ENCODE measurements at regions of chr18 and their contacts with region 1.

Region 1: GRCh38 chr18:54224379-54225014 is at the start of gene MBD2:
- DNase-seq: peak; percentile 97
- H3K4me3 ChIP-seq: peak within 1 kb of the TSS; percentile 72
- H3K27ac ChIP-seq: peak within 1 kb of the TSS; percentile 57
- H3K4me1 ChIP-seq: peaks cover 31% of the 10 kb centered on the region
- H3K27me3 ChIP-seq: no peaks in the 10 kb centered on the region
- CTCF ChIP-seq: peak; percentile 25; the same call in 1 of the 2 replicates
- total RNA-seq, gene MBD2: 79.7 and 86.7 TPM in 2 replicates

Region 2: DNA sequence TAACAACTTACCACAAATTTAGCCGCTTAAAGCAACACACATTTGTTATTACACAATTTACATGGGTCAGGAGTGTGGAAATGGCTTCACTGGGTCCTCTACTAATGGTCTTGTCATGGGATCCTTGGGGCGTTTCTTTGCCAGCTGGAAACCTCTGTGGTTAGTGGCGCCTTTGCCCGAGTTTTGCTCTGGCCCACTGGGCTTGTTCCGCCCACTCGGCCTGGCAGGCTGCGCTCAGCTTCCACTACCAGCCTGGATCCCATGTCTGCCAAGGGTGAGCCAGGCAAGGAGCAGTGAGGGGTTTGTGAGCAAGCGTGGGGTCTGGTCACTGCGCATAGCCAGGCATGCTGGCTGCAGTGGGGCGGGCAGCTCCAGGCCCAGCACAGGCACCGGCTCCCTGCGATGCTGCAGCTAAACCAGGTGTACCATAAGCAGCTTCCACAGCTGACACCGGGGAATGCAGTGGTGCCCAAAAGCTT is 16.2 kb after region 1 on chr18:
- CTCF ChIA-PET with region 1: no interaction called
- POLR2A ChIA-PET with region 1: no interaction called
- intact Hi-C with region 1: no loop called
- DNase-seq: no peak
- H3K4me3 ChIP-seq: no peak overlapping the region
- H3K27ac ChIP-seq: no peak overlapping the region
- H3K4me1 ChIP-seq: no peaks in the 10 kb centered on the region
- H3K27me3 ChIP-seq: no peaks in the 10 kb centered on the region
- CTCF ChIP-seq: no peak

Region 3: DNA sequence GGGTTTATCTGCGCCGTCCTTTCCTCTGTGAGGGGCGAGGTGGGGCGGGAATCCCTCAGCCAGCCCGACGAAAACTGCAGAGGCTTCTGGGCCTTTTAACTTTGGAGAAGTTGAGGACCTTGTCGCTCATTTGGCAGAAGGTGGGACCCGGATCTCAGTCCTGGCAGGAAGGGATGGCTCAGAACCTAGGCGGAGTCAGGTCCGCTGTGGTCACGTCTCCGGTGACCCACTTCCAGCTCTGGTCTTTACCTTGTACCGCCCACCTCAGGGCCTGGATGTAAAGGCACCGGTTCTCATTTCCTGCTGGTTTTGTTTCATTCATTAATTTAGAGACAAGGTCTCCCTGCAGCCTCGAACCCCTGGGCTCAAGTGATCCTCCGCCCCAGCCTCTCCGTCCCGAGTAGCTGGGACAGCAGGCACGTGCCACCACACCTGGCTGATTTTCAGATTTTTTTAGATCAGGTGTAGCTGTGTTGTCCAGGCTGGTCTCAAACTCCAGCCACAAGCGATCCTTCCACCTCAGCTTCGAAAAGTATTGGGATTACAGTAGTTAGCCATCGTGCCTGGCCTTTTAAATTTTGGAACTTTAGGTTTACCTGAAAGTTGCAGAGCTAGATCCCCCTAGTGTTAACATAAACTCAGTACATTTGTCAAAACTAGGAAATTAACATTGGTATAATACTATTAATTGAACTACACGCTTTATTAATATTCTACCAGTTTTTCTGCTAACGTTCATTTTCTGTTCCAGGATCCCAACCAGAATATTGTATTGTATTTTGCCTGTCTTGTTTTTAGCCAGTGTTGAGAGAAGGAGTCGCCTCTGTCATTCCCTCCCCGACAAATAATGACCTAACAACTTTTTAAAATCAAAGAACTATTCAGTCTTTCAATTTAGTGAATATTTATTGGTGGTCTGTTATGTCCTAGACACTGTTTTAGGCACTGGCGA is 45.7 kb after region 1 on chr18:
- CTCF ChIA-PET with region 1: no interaction called
- POLR2A ChIA-PET with region 1: no interaction called
- intact Hi-C with region 1: loop called (anchors 1 kb)
- DNase-seq: peak; percentile 37
- H3K4me3 ChIP-seq: peak overlapping the region; percentile 74
- H3K27ac ChIP-seq: peak overlapping the region; percentile 93
- H3K4me1 ChIP-seq: peaks cover 19% of the 10 kb centered on the region
- H3K27me3 ChIP-seq: no peaks in the 10 kb centered on the region
- CTCF ChIP-seq: peak; percentile 55; the same call in 1 of the 2 replicates

Region 4: GRCh38 chr18:54358495-54359040 is 134.1 kb after region 1 on chr18:
- CTCF ChIA-PET with region 1: no interaction called
- POLR2A ChIA-PET with region 1: no interaction called
- intact Hi-C with region 1: no loop called
- DNase-seq: no peak
- H3K4me3 ChIP-seq: peak overlapping the region; percentile 72
- H3K27ac ChIP-seq: peak overlapping the region; percentile 70
- H3K4me1 ChIP-seq: peaks cover 5% of the 10 kb centered on the region
- H3K27me3 ChIP-seq: no peaks in the 10 kb centered on the region
- CTCF ChIP-seq: no peak

Measured in A673 (cell line).